B cell (primary cell): ENCODE measurements at regions of chr1 and their contacts with region 1.

Region 1: GRCh38 chr1:180154325-180155181 is at the start of gene QSOX1:
- DNase-seq: peak; percentile 91
- ATAC-seq: peak; percentile 96
- H3K4me3 ChIP-seq: peak within 1 kb of the TSS; percentile 58 to 89 (median 84)
- H3K4me3 Mint-ChIP-seq: peak within 1 kb of the TSS; percentile 96
- H3K27ac ChIP-seq: peak within 1 kb of the TSS; percentile 21 to 65
- H3K27ac Mint-ChIP-seq: peak within 1 kb of the TSS; percentile 86
- H3K4me1 ChIP-seq: peaks cover 22 to 25% of the 10 kb centered on the region in 2 donors
- H3K4me1 Mint-ChIP-seq: peaks cover 26% of the 10 kb centered on the region
- H3K27me3 ChIP-seq: no peaks in the 10 kb centered on the region
- H3K27me3 Mint-ChIP-seq: no peaks in the 10 kb centered on the region
- CTCF ChIP-seq: peak; percentile 9
- total RNA-seq, gene QSOX1: 16.9 and 20.6 TPM in 2 replicates

Region 2: GRCh38 chr1:180228448-180229151 is 74.0 kb after region 1 on chr1:
- CTCF ChIA-PET with region 1: no interaction called
- POLR2A ChIA-PET with region 1: no interaction called
- intact Hi-C with region 1: loop called (anchors 1 kb)
- DNase-seq: peak; percentile 38
- ATAC-seq: no peak
- H3K4me3 ChIP-seq: peak overlapping the region in 4 of 5 experiments; percentile 21 to 58 (median 56)
- H3K4me3 Mint-ChIP-seq: peak overlapping the region; percentile 69
- H3K27ac ChIP-seq: no peak overlapping the region
- H3K27ac Mint-ChIP-seq: no peak overlapping the region
- H3K4me1 ChIP-seq: peaks cover 37 to 46% of the 10 kb centered on the region in 2 donors
- H3K4me1 Mint-ChIP-seq: peaks cover 19% of the 10 kb centered on the region
- H3K27me3 ChIP-seq: peaks cover 0 to 82% (median 51%) of the 10 kb centered on the region in 4 experiments
- H3K27me3 Mint-ChIP-seq: peaks cover 61% of the 10 kb centered on the region
- CTCF ChIP-seq: no peak

Region 3: GRCh38 chr1:182029379-182030331 is 1875.1 kb after region 1 on chr1:
- CTCF ChIA-PET with region 1: no interaction called
- POLR2A ChIA-PET with region 1: no interaction called
- intact Hi-C with region 1: loop called (anchors 5 kb)
- DNase-seq: peak; percentile 98
- ATAC-seq: peak; percentile 92
- H3K4me3 ChIP-seq: peak overlapping the region; percentile 50 to 84 (median 72)
- H3K4me3 Mint-ChIP-seq: peak overlapping the region; percentile 92
- H3K27ac ChIP-seq: peak overlapping the region; percentile 60 to 71
- H3K27ac Mint-ChIP-seq: peak overlapping the region; percentile 94
- H3K4me1 ChIP-seq: peaks cover 9 to 12% of the 10 kb centered on the region in 2 donors
- H3K4me1 Mint-ChIP-seq: peaks cover 15% of the 10 kb centered on the region
- H3K27me3 ChIP-seq: no peaks in the 10 kb centered on the region
- H3K27me3 Mint-ChIP-seq: no peaks in the 10 kb centered on the region
- CTCF ChIP-seq: peak; percentile 41